ENCODE measurements at regions of chr5 and their contacts with region 1.

Region 1: DNA sequence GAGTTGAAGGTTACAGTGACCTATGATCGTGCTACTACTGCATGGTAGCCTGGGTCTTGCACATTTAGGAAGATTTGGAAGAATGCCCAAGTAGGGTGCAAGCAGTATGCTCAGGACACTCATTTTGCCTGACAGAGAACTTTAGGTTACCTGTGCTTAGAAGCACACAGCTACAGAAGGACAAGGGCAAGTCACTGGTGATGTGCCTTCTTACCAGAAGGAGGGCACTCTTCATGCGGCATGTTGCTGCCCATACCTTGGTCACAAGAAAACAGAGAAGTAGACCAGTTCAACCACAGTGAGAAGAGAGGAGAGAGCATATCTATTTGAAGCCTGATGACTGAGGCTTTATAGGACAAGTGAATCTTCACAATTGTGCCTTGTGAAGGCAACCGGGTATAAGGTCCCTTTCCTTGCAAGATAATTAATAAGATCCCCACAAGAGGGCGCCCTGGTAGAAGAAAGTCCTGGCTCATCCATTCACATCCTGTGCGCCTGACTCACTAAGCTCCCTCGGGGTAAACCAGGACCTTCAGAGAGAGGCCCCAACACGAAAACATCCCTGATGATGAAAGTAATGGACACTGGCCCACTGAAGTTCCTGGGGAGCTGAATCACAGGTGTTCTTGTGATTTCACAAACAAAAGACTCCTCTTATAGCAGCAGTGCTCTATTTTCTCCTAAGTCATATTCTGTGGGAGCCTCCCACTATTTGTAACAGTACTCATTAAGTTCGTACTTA is 38.1 kb upstream of the STARD4 start:
- DNase-seq: peak; percentile 59 to 70
- ATAC-seq: peak; percentile 81

Region 2: DNA sequence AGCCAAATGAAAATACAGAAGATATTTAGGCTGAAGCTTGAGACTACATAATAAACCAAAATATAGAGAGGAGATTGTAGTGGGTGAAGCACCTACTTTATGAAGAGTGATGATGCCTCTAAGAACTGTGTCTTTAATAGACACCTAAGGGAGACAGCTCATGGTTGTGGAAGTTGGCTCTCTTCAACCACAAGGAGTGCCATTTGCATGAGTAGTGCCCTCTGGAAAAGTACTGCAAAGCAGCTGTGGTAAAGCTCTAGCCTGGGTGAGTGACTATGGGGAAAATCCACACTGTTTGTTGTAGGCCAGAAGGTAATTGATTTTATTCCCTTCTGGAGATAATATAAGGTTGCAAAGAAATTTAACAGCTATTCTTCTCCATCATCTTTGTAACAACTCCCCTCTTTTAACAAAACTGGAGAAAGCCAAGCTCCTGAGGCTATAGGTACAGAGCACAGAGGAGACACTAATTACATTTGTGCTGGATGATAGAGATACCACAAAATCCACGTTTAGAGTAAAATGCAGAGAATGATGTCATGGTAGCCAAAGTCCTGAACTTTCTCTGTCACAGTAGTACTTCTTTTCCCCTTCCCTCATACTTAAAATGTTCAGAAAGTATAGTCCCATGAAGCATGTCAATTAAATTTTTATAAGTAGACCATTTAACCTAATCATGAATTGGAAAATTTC is 160.9 kb before region 1 on chr5:
- intact Hi-C with region 1: no loop called
- DNase-seq: no peak
- ATAC-seq: no peak

Region 3: DNA sequence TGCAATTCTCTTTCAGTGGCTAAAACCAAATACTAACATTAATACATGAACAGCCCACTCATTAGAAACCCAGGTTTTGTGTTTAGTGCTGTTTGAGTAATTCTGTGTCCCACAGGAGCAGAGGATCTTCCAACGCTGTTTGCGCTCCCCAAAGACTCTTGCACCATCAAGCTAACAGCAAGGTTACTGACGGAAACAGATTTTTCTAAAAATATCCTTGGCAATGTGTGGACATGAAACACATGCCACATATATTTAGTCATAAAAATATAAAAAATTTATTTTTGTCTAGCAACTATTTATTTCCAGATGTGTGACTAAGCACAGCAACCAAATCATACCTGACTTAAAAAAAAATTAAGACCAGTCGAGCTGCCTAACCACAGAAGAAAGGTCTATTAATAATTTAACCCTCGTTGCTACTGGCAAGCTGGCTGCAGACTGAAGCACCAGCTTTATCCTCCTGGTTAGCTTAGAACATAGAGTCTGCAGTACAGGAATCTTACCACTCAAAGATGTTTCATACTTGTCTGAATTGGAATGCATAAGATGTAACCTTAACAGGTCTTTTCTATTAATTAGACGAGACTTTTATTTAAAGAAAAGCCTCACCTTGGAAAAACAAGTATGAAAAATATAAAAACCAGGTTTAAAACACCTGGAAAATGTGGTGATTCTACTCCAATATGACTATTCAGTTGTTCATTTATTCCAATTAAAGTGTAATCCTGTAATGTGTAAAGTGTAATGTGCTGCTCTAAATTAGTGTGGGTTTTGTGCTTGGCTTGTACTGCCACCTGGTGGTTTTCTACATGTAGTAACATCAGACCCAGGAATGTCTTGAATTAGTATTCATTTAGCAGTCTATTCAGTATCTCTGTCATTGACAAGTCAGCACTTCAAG is 596.1 kb after region 1 on chr5:
- intact Hi-C with region 1: loop called (anchors 1 to 10 kb)
- DNase-seq: peak; percentile 34 to 49
- ATAC-seq: peak; percentile 81